ENCODE measurements at regions of chr1 and their contacts with region 1.

Region 1: GRCh38 chr1:71068325-71069240 is 12.3 kb downstream of the ZRANB2 start:
- DNase-seq: no peak
- H3K4me3 ChIP-seq: no peak overlapping the region
- H3K27ac ChIP-seq: no peak overlapping the region
- H3K4me1 ChIP-seq: no peaks in the 10 kb centered on the region
- H3K27me3 ChIP-seq: no peaks in the 10 kb centered on the region
- CTCF ChIP-seq: no peak
- POLR2A ChIP-seq: no peak

Region 2: DNA sequence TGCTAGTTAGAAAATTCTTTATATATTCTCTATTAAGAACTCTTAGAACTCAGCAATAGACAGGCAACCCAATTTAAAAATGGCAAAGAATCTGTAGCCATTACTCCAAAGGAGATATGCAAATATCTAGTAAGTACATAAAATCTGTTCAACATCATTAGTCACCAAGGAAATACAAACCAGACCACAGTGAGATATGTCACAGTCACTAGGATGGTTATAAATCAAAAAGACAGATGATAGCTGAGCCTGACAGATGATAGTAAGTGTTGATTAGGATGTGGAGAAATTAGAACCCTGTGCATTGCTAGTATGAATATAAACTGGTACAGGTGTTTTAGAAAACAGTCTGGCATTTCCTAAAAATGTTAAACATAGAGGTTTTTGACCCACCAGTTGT is 820.8 kb before region 1 on chr1:
- intact Hi-C with region 1: loop called in 1 of 2 experiments (anchors 10 kb)
- DNase-seq: no peak
- H3K4me3 ChIP-seq: no peak overlapping the region
- H3K27ac ChIP-seq: no peak overlapping the region
- H3K4me1 ChIP-seq: peaks cover 0 to 6% of the 10 kb centered on the region in 2 donors
- H3K27me3 ChIP-seq: no peaks in the 10 kb centered on the region
- CTCF ChIP-seq: no peak
- POLR2A ChIP-seq: no peak

Region 3: DNA sequence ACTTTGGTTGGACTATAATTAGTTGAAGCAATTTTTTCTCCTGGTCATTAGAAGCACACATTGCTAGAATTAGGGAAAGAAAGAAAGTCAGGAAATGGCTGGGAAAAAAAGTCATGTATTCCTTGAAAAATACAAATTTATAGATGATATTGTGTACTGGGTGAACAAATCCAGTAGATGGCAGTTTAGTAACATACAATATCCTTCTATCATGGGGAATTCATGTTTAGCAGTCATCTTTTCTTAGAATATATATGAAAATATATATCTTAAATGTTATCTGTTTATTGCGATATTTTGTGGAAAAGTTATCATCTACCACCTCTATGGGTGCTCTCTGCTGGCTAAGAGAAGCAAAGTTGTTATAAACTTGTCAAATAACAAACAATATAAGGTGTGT is 25.4 kb after region 1 on chr1:
- intact Hi-C with region 1: no loop called
- DNase-seq: no peak
- H3K4me3 ChIP-seq: no peak overlapping the region
- H3K27ac ChIP-seq: no peak overlapping the region
- H3K4me1 ChIP-seq: no peaks in the 10 kb centered on the region
- H3K27me3 ChIP-seq: no peaks in the 10 kb centered on the region
- CTCF ChIP-seq: peak; percentile 3 to 45 (median 25)
- POLR2A ChIP-seq: no peak

Region 4: DNA sequence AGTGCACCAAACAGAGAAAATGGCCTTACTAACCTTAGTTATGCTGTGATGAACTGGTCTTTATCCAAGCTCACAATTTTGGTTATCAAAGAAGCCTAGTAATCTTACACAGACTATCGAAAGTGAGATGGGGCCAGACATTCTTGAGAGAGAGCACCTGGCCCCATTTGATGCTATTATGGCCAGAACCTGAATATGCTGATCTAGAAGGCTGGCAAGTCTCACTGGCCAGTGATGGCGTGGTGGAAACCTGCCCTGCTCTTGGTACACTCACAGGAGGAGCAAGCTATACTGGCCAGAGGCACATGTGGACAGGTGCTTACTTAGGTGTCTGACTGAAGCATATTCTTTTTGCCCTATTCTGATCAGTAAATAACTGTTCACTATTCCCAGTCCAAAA is 370.0 kb after region 1 on chr1:
- intact Hi-C with region 1: no loop called
- DNase-seq: no peak
- H3K4me3 ChIP-seq: no peak overlapping the region
- H3K27ac ChIP-seq: no peak overlapping the region
- H3K4me1 ChIP-seq: no peaks in the 10 kb centered on the region
- H3K27me3 ChIP-seq: no peaks in the 10 kb centered on the region
- CTCF ChIP-seq: no peak
- POLR2A ChIP-seq: no peak